H1 (cell line): ENCODE measurements at regions of chr2 and their contacts with region 1.

Region 1: GRCh38 chr2:223860809-223861738 is 23.7 kb upstream of the AP1S3 start:
- DNase-seq: no peak
- H3K4me3 ChIP-seq: no peak overlapping the region
- H3K27ac ChIP-seq: no peak overlapping the region
- H3K4me1 ChIP-seq: peaks cover 0 to 5% (median 0%) of the 10 kb centered on the region in 4 experiments; a peak in 1 of 7 replicates
- H3K27me3 ChIP-seq: no peaks in the 10 kb centered on the region
- CTCF ChIP-seq: no peak; a peak in 1 of 4 replicates
- EP300 ChIP-seq: no peak
- POLR2A ChIP-seq: no peak
- RAD21 ChIP-seq: no peak

Region 2: GRCh38 chr2:223779877-223780276 is 81.2 kb before region 1 on chr2:
- CTCF ChIA-PET with region 1: interaction called, 11 read pairs
- POLR2A ChIA-PET with region 1: no interaction called
- DNase-seq: peak; percentile 17 to 62
- H3K4me3 ChIP-seq: no peak overlapping the region
- H3K27ac ChIP-seq: no peak overlapping the region
- H3K4me1 ChIP-seq: peaks cover 0 to 5% (median 3%) of the 10 kb centered on the region in 4 experiments; a peak in 2 of 7 replicates
- H3K27me3 ChIP-seq: no peaks in the 10 kb centered on the region
- CTCF ChIP-seq: peak; percentile 6 to 72 (median 61)
- EP300 ChIP-seq: no peak
- POLR2A ChIP-seq: no peak
- RAD21 ChIP-seq: peak; percentile 61 to 72

Region 3: DNA sequence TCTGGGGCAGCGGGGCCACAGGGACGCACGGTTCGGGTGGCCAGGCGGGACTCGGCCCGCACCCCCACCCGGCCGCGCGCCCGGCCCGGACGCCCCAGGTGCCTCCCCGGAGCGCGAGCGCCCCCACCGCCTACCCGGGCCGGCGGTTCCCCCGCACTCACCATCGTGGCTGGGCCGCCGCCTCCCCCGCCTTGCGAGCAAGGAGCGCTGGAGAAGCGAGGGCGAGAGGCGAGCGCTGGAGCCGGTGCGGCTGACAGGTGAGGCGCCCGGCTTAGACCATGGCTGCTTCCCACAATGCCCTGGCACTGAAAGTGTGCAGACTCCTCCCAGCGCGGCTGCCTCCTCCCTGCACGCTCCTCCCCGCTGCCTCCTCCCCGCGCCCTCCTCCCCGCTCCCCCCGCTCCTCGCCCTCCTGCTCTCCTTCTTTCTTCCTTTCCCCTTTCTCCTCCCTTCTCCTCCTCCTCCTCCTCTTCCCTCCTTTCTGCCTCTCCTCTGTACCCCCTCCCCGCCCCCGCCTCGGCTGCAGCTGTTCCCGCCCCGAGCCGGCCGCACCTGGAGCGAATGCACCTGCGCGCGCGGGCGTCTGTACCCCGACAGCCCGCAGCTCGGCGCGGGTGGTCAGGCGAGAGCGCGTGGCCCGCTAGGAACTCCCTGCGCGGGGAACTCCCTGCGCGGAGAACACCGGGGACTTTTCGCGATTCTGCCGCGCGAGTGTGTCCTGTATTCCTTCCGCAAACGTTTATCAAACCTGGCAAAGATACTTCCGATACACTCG is 23.6 kb before region 1 on chr2 and contains the start of gene AP1S3:
- CTCF ChIA-PET with region 1: interaction called, 13 read pairs
- POLR2A ChIA-PET with region 1: interaction called, 3 read pairs
- DNase-seq: peak; percentile 68 to 86
- H3K4me3 ChIP-seq: peak within 1 kb of the TSS; percentile 75 to 87 (median 82)
- H3K27ac ChIP-seq: peak within 1 kb of the TSS; percentile 43; the same call in 1 of the 2 replicates
- H3K4me1 ChIP-seq: peaks cover 12 to 23% (median 18%) of the 10 kb centered on the region in 4 experiments
- H3K27me3 ChIP-seq: no peaks in the 10 kb centered on the region
- CTCF ChIP-seq: peak in 1 of 3 experiments; percentile 1; a peak in 1 of 4 replicates
- EP300 ChIP-seq: no peak
- POLR2A ChIP-seq: peak; percentile 17 to 41; a peak in 2 of 3 replicates
- RAD21 ChIP-seq: no peak
- total RNA-seq, gene AP1S3: 19.7 and 20.2 TPM in 2 replicates

Region 4: DNA sequence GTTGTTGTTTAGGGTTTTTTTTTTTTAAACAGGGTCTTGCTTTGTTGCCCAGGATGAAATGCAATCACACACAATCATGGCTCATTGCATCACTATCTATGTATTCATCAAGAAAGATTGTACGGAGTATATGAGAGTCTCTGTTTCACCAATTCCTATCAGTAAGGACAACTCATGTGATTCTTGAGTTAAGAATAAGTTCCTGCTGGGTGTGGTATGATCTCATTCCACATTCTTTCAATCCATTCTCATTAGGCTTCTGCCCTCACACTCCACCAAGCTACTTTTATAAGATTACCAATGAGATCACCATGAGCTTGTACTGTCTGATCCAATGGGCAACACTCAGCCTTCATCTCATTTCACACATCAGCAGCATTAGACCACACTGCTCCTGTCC is 14.5 kb before region 1 on chr2:
- CTCF ChIA-PET with region 1: interaction called, 12 read pairs
- POLR2A ChIA-PET with region 1: no interaction called
- DNase-seq: no peak
- H3K4me3 ChIP-seq: no peak overlapping the region
- H3K27ac ChIP-seq: no peak overlapping the region
- H3K4me1 ChIP-seq: no peaks in the 10 kb centered on the region
- H3K27me3 ChIP-seq: no peaks in the 10 kb centered on the region
- CTCF ChIP-seq: no peak
- EP300 ChIP-seq: no peak
- POLR2A ChIP-seq: no peak
- RAD21 ChIP-seq: no peak

Region 5: DNA sequence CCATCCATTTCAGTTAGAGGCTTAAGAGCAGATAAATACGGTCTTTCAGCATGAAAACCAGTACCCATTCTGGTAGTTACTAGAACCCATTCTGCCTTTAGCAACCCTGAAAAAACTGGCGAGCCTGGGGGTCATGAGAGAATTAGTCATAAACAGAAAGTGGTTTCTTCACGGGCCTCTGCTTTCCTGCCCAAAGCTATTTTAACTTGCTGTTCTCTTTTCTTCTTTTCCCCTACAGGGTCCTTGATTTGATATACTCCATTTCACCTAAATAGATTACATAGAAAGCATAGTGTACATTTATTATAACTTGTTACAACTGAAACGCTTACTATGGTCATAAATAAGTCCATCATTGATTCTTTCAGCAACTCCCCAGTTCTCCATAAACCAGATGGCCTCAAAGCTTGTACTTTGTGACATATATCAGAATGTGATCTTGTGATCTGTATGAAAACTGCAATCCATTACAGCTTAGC is 35.8 kb after region 1 on chr2:
- CTCF ChIA-PET with region 1: no interaction called
- POLR2A ChIA-PET with region 1: no interaction called
- DNase-seq: no peak
- H3K4me3 ChIP-seq: no peak overlapping the region
- H3K27ac ChIP-seq: no peak overlapping the region
- H3K4me1 ChIP-seq: peaks cover 0 to 4% (median 0%) of the 10 kb centered on the region in 4 experiments; a peak in 1 of 7 replicates
- H3K27me3 ChIP-seq: no peaks in the 10 kb centered on the region
- CTCF ChIP-seq: no peak
- EP300 ChIP-seq: no peak
- POLR2A ChIP-seq: no peak
- RAD21 ChIP-seq: no peak